ENCODE measurements at regions of chr4 and their contacts with region 1.

Region 1: GRCh38 chr4:38691251-38692008 is 27.4 kb downstream of the KLF3 start:
- DNase-seq: no peak
- CTCF ChIP-seq: no peak

Region 2: GRCh38 chr4:38667085-38667893 is 24.1 kb before region 1 on chr4:
- CTCF ChIA-PET with region 1: no interaction called
- POLR2A ChIA-PET with region 1: no interaction called
- DNase-seq: peak; percentile 33
- CTCF ChIP-seq: no peak

Region 3: DNA sequence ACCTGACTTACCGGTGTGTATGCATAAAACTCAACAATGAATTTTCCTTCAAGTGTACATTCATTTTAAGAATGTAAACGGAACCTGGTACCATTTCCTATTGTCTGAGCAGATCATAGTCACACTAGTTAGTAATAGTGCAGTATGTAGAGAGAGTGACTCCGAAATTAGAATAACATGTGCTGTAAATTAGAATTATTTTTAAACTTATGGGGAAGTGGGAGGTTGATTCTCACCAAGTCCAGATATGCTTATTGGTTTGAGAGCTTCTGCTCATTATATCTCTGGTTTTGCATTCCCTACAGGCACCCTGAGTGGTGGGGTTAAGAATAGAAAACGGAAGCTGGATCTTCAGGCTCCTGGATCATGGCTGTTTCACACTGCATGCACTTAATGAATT is 12.2 kb after region 1 on chr4:
- CTCF ChIA-PET with region 1: interaction called, 11 read pairs
- POLR2A ChIA-PET with region 1: no interaction called
- DNase-seq: no peak
- CTCF ChIP-seq: no peak

Region 4: GRCh38 chr4:38740303-38740702 is 48.9 kb after region 1 on chr4:
- CTCF ChIA-PET with region 1: no interaction called
- POLR2A ChIA-PET with region 1: no interaction called
- DNase-seq: no peak
- CTCF ChIP-seq: no peak

Measured in GM10248 (cell line).